T-cell (primary cell): ENCODE measurements at regions of chr14 and their contacts with region 1.

Region 1: GRCh38 chr14:74302634-74303577 is at the start of gene ABCD4:
- DNase-seq: peak; percentile 51 to 87 (median 74)
- ATAC-seq: peak; percentile 87 to 93 (median 90)
- H3K4me3 ChIP-seq: peak within 1 kb of the TSS; percentile 78 to 91
- H3K4me3 Mint-ChIP-seq: peak within 1 kb of the TSS; percentile 94 to 98 (median 97)
- H3K27ac ChIP-seq: peak within 1 kb of the TSS; percentile 89
- H3K27ac Mint-ChIP-seq: peak within 1 kb of the TSS; percentile 95 to 96
- H3K4me1 ChIP-seq: peaks cover 2 to 32% of the 10 kb centered on the region in 2 experiments
- H3K4me1 Mint-ChIP-seq: peaks cover 34 to 37% (median 35%) of the 10 kb centered on the region in 3 donors
- H3K27me3 ChIP-seq: no peaks in the 10 kb centered on the region
- H3K27me3 Mint-ChIP-seq: no peaks in the 10 kb centered on the region
- total RNA-seq, gene ABCD4: 70.3 to 103 (median 91.8) TPM

Region 2: GRCh38 chr14:74290415-74290814 is 12.5 kb before region 1 on chr14:
- CTCF ChIA-PET with region 1: no interaction called
- POLR2A ChIA-PET with region 1: interaction called in 1 of 2 experiments, 12 read pairs
- DNase-seq: peak in 3 of 35 experiments; percentile 8 to 44 (median 10)
- ATAC-seq: peak in 1 of 4 experiments; percentile 27
- H3K4me3 ChIP-seq: no peak overlapping the region
- H3K4me3 Mint-ChIP-seq: no peak overlapping the region
- H3K27ac ChIP-seq: no peak overlapping the region
- H3K27ac Mint-ChIP-seq: no peak overlapping the region
- H3K4me1 ChIP-seq: no peaks in the 10 kb centered on the region
- H3K4me1 Mint-ChIP-seq: peaks cover 0 to 3% (median 1%) of the 10 kb centered on the region in 3 donors
- H3K27me3 ChIP-seq: no peaks in the 10 kb centered on the region
- H3K27me3 Mint-ChIP-seq: no peaks in the 10 kb centered on the region